Activated naive CD4-positive, alpha-beta T cell treated with anti-CD3 and anti-CD28 coated beads for 36 hours (primary cell): ENCODE measurements at regions of chr14 and their contacts with region 1.

Region 1: DNA sequence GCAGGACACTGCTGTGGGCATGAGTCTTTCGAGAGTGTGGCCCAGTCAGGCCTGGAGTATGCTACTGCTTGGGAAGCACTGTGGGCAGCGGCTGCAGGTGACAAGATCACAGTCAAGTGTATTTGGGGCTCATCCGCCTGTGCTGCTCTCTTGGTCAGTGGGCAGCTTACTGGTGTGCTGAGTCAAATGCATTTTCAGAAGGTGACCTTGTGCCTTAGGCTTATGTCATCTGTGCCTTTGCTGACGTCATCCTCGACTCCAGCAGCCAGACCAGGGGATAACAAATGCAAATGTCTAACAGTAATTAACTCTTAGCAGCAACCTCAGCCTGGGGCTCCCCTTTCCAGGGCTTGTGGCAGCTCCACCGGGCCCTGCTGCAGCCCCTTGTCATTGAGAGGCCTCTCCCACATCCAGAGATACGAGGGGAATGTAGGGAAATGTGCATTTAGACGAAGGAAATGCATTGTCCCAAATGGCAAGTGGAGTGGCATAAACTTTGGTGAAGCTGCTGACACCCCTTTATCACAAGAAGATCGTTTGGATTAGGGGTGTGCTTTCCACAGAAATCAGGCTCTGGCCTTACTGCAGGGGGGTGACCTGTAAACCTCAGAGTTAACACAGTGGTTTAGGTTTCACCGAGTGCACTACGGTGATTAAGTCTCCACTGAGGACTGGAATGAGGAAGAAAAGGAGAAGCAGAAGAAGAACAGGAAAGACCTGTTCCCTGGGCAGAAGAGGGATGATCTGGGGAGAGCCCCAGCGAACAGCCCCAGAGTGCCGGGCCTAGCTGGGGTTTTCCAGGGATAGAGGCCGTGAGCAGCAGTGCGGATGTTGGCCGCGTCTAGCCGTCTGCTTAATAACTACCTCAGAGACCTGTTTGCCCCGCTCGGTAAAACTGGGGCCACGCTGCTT is 39.7 kb downstream of the PSMA6 start:
- DNase-seq: no peak
- H3K4me3 Mint-ChIP-seq: no peak overlapping the region
- H3K27ac Mint-ChIP-seq: peak overlapping the region; percentile 94
- H3K4me1 Mint-ChIP-seq: peaks cover 32% of the 10 kb centered on the region
- H3K27me3 Mint-ChIP-seq: no peaks in the 10 kb centered on the region

Region 2: DNA sequence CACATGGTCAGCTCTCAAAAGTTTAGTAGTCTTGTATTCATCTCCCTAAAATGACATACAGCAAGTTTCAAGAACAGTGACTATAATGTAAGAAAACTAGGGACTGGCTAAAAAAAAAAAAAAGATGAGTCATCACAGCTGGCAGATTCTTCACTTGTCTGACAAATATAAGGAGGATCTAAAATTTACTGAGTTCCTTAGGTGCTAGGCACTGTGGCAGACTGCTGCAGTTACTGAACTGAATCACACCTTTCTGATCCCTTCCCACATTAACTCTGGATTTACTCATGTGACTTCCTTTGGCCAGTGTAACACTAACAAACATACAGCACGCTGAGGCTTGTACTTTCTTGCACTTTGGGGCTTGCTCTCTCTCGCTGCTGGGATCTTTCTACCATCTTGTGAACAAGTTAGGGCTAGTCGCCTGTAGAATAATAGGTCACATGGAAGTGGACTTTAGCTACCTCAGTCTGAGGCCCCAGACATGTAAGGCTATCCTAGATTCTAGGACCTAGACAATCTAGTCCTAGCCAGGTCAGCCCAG is 488.8 kb before region 1 on chr14:
- CTCF ChIA-PET with region 1: no interaction called
- intact Hi-C with region 1: loop called (anchors 1 kb)
- DNase-seq: peak; percentile 59
- H3K4me3 Mint-ChIP-seq: no peak overlapping the region
- H3K27ac Mint-ChIP-seq: peak overlapping the region; percentile 89
- H3K4me1 Mint-ChIP-seq: peaks cover 30% of the 10 kb centered on the region
- H3K27me3 Mint-ChIP-seq: no peaks in the 10 kb centered on the region

Region 3: GRCh38 chr14:35301735-35302528 is 29.9 kb before region 1 on chr14:
- CTCF ChIA-PET with region 1: no interaction called
- intact Hi-C with region 1: loop called (anchors 1 kb)
- DNase-seq: peak; percentile 14
- H3K4me3 Mint-ChIP-seq: peak overlapping the region; percentile 27
- H3K27ac Mint-ChIP-seq: peak overlapping the region; percentile 89
- H3K4me1 Mint-ChIP-seq: peaks cover 68% of the 10 kb centered on the region
- H3K27me3 Mint-ChIP-seq: no peaks in the 10 kb centered on the region

Region 4: GRCh38 chr14:35320472-35320871 is 11.4 kb before region 1 on chr14:
- CTCF ChIA-PET with region 1: interaction called, 4 read pairs
- intact Hi-C with region 1: loop called (anchors 1 kb)
- DNase-seq: no peak
- H3K4me3 Mint-ChIP-seq: no peak overlapping the region
- H3K27ac Mint-ChIP-seq: no peak overlapping the region
- H3K4me1 Mint-ChIP-seq: peaks cover 1% of the 10 kb centered on the region
- H3K27me3 Mint-ChIP-seq: no peaks in the 10 kb centered on the region

Region 5: DNA sequence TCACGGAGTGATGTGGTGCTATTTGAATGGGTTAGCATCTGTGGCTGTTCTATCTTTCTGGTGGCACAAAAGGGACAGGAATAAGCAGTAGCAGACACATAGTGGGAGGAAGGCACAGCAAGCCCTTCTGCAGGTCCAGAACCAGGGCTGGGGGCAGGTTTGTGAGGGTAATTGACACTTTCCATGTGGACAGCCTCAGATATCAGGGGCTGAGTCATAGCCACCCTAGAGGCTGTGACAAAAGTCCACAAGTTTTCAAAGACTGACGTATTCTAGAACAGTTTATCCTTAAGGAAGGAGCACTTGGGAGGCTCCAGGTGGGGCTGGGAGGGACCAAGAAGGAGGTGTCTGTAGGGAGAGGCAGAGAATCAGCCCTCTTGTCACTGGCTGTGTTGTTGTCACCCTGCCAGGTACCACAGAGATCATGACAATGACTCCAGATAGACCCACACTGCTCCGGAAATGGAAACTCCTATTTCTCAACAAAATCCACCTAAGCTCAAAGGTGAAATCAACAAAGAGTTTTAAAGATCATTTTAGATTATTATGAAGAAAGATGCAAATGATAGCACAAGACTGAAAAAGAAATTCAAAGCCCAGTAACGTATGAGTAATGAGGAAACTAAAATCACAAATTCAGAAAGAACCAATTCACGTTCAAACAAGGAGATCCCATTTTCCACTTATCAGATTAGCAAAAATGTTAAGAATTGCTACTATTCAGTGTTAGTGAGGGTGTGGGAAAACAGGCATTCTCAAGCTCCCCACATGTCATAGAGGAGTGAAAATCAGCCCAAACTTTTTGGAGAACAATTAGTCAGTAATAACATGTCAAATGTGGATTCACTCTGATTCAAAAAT is 24.4 kb after region 1 on chr14:
- CTCF ChIA-PET with region 1: interaction called, 3 read pairs
- intact Hi-C with region 1: loop called (anchors 1 kb)
- DNase-seq: peak; percentile 86
- H3K4me3 Mint-ChIP-seq: peak overlapping the region; percentile 12
- H3K27ac Mint-ChIP-seq: peak overlapping the region; percentile 91
- H3K4me1 Mint-ChIP-seq: peaks cover 46% of the 10 kb centered on the region
- H3K27me3 Mint-ChIP-seq: no peaks in the 10 kb centered on the region

Region 6: DNA sequence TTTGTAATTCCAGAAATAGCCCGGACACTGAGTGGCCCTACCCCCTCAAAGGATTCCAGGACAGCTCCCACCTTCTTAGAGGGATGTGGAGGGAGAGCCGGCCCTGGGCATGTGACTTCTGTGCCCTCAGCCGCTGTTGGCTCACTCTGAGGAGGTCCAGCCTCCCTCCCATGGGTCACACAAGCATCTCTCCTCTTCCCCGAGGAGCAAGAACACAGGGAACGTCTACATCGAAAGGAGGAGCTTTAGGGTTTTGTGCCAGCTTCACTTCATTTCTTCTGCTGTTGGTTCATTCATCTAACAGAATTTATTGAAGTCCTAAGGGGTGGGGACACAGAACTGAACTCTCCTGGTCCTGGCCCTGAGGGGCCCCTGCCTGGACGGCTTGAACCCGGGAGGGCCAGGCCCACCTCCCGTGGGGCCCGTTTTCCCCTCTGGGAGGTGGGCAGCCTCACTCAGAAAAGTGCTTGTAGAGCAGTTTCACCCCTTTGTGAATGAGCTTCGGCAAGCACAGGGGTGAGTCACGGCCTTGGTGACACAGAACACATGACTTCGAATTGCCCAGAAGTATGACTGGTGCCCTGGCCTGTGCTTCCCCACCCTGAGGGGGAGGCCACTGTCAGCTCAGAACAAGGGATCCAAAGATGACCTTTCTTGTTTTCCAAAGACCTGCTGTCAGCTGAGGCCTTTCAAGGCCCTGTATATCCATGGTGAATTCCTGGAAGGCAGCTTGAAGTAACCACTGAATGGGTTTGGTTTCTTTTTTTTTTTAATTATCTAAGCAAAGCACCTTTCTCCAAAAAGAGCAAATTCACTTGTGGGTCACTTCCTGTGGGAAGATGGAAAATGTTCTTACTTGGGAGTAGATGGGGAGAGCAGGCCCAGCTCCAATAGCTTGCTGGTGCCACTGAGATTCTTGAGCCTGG is 33.5 kb after region 1 on chr14:
- CTCF ChIA-PET with region 1: interaction called, 4 read pairs
- intact Hi-C with region 1: loop called (anchors 1 kb)
- DNase-seq: peak; percentile 94
- H3K4me3 Mint-ChIP-seq: no peak overlapping the region
- H3K27ac Mint-ChIP-seq: peak overlapping the region; percentile 92
- H3K4me1 Mint-ChIP-seq: peaks cover 60% of the 10 kb centered on the region
- H3K27me3 Mint-ChIP-seq: no peaks in the 10 kb centered on the region